ENCODE measurements at regions of chr12 and their contacts with region 1.

Region 1: GRCh38 chr12:57452937-57453509 is 2.1 kb upstream of the INHBE start:
- H3K4me3 Mint-ChIP-seq: no peak overlapping the region
- H3K27ac Mint-ChIP-seq: no peak overlapping the region
- H3K4me1 Mint-ChIP-seq: peaks cover 23% of the 10 kb centered on the region
- H3K27me3 Mint-ChIP-seq: peaks cover 14% of the 10 kb centered on the region

Region 2: GRCh38 chr12:57046947-57047890 is 405.8 kb before region 1 on chr12:
- intact Hi-C with region 1: no loop called
- H3K4me3 Mint-ChIP-seq: peak overlapping the region; percentile 44
- H3K27ac Mint-ChIP-seq: peak overlapping the region; percentile 84
- H3K4me1 Mint-ChIP-seq: peaks cover 67% of the 10 kb centered on the region
- H3K27me3 Mint-ChIP-seq: peaks cover 7% of the 10 kb centered on the region

Region 3: GRCh38 chr12:57261428-57261865 is 191.6 kb before region 1 on chr12:
- intact Hi-C with region 1: loop called (anchors 5 kb)
- H3K4me3 Mint-ChIP-seq: no peak overlapping the region
- H3K27ac Mint-ChIP-seq: no peak overlapping the region
- H3K4me1 Mint-ChIP-seq: no peaks in the 10 kb centered on the region
- H3K27me3 Mint-ChIP-seq: no peaks in the 10 kb centered on the region

Region 4: DNA sequence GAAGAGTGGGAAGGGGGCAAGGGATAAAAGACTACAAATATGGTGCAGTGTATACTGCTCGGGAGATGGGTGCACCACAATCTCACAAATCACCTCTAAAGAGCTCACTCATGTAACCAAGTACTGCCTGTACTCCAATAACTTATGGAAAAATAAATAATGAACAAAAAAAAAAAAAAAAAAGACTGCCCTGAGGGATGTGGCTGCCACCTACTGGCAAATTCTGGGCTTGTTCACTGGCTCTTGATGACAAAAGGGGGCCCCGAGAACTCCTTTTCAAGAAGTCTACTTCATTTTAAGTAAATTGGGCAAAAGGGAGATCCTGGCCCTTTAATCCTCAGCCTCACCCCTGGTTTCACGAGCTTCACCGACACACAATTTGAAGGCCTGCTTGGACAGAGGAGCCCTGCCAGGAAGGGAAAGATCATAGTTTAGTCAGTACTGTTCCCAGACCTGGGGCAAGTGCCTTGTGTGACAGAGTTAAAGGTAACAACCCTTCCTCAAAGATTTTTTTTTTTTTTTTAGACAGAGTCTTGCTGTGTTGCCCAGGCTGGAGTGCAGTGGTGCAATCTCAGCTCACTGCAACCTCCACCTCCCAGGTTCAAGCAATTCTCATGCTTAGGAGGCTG is 176.0 kb before region 1 on chr12:
- intact Hi-C with region 1: no loop called
- H3K4me3 Mint-ChIP-seq: no peak overlapping the region
- H3K27ac Mint-ChIP-seq: no peak overlapping the region
- H3K4me1 Mint-ChIP-seq: peaks cover 21% of the 10 kb centered on the region
- H3K27me3 Mint-ChIP-seq: no peaks in the 10 kb centered on the region

Region 5: DNA sequence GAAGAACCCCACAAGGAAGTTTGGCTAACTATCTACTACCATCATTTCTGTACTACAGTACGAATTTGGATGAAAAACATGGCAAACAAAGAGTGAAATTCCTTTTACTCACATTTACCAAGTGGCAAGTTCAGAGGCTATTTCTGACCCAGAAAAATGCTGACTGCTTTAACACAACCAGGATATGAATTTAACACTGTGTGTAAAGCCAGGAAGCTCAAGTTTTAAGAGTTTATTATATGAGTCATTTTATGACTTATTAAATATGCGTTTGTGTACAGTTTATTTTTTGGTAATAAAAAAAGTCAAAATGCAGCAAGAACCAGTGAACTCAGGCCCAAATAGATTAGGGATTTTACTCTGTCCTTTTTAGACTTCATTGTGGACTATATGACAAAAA is 143.6 kb before region 1 on chr12:
- intact Hi-C with region 1: loop called (anchors 2 kb)
- H3K4me3 Mint-ChIP-seq: no peak overlapping the region
- H3K27ac Mint-ChIP-seq: no peak overlapping the region
- H3K4me1 Mint-ChIP-seq: no peaks in the 10 kb centered on the region
- H3K27me3 Mint-ChIP-seq: no peaks in the 10 kb centered on the region

Region 6: DNA sequence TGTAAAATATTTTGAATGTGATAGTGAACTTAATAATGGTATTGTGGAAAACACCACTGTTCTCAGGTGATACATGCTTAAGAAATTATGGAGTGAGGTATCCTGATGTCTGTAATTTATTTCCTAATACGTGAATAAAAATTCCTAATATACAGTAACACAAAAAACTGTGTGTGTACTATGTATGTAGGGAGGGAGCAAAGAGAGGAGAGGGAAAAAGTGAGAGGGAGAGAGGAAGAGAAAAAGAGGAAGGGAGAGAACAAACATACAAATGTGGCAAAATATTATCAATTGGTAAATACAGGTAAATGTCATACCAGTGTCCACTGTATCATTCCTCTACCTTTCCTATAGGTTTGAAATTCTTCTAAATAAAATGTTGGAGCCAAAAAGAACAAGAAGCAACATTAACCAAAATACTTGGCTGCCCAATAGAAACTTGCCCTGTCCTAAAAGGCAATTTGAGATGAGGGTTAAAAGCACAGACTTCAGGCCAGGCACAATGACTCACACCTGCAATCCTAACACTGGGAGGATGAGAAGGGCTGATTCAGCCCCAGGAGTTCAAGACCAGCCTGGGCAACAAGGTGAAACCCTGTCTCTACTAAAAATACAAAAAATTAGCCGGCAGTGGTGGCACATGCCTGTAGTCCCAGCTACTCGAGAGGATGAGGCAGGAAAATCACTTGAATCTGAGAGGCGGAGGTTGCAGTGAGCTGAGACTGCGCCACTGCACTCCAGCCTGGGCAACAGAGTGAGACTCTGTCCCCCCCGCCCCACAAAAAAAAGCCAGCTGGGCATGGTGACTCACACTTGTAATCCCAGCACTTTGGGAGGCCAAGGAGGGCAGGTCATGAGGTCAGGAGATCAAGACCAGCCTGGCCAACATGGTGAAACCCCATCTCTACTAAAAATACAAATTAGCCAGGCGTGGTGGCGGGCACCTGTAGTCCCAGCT is 36.7 kb before region 1 on chr12:
- intact Hi-C with region 1: no loop called
- H3K4me3 Mint-ChIP-seq: no peak overlapping the region
- H3K27ac Mint-ChIP-seq: no peak overlapping the region
- H3K4me1 Mint-ChIP-seq: peaks cover 29% of the 10 kb centered on the region
- H3K27me3 Mint-ChIP-seq: no peaks in the 10 kb centered on the region

Region 7: GRCh38 chr12:57563358-57563757 is 110.3 kb after region 1 on chr12:
- intact Hi-C with region 1: no loop called
- H3K4me3 Mint-ChIP-seq: no peak overlapping the region
- H3K27ac Mint-ChIP-seq: no peak overlapping the region
- H3K4me1 Mint-ChIP-seq: no peaks in the 10 kb centered on the region
- H3K27me3 Mint-ChIP-seq: peaks cover 30% of the 10 kb centered on the region

Measured in dendritic cell treated with granulocyte-macrophage colony-stimulating factor and Interleukin-4, amounts not matched to agents 40 ng/mL and 50 ng/mL, for 4 days (primary cell).